Posterior vena cava (tissue), 2 donors: ENCODE measurements at regions of chr3 and their contacts with region 1.

Region 1: GRCh38 chr3:40524568-40525285 is at the start of gene ZNF621:
- DNase-seq: peak; percentile 98
- total RNA-seq, gene ZNF621: 21.0 to 23.8 TPM

Region 2: GRCh38 chr3:40309418-40309924 is 215.3 kb before region 1 on chr3 and contains the start of gene EIF1B:
- intact Hi-C with region 1: loop called in 1 of 2 experiments (anchors 10 kb)
- DNase-seq: peak; percentile 100
- total RNA-seq, gene EIF1B: 47.3 to 50.9 TPM

Region 3: GRCh38 chr3:40452876-40453730 is 71.6 kb before region 1 on chr3:
- intact Hi-C with region 1: loop called in 1 of 2 experiments (anchors 10 kb)
- DNase-seq: peak; percentile 99

Region 4: GRCh38 chr3:40895109-40895508 is 370.4 kb after region 1 on chr3:
- intact Hi-C with region 1: no loop called
- DNase-seq: no peak